ENCODE measurements at regions of chr10 and their contacts with region 1.

Region 1: GRCh38 chr10:63720072-63720537 is 198.9 kb downstream of the REEP3 start:
- DNase-seq: peak; percentile 27
- H3K4me3 ChIP-seq: peak overlapping the region in 1 of 2 experiments; percentile 53; a peak in 1 of 4 replicates
- H3K27ac ChIP-seq: peak overlapping the region in 1 of 2 experiments; percentile 56; a peak in 2 of 4 replicates
- H3K4me1 ChIP-seq: peaks cover 44 to 56% of the 10 kb centered on the region in 2 experiments
- H3K27me3 ChIP-seq: no peaks in the 10 kb centered on the region
- CTCF ChIP-seq: peak; percentile 99
- EP300 ChIP-seq: no peak
- RAD21 ChIP-seq: peak; percentile 95

Region 2: GRCh38 chr10:63166742-63167258 is 553.3 kb before region 1 on chr10:
- CTCF ChIA-PET with region 1: interaction called, 199 read pairs
- POLR2A ChIA-PET with region 1: interaction called, 4 read pairs
- DNase-seq: peak; percentile 41
- H3K4me3 ChIP-seq: no peak overlapping the region
- H3K27ac ChIP-seq: peak overlapping the region; percentile 17 to 34; a peak in 1 of 4 replicates
- H3K4me1 ChIP-seq: peaks cover 0 to 5% of the 10 kb centered on the region in 2 experiments; a peak in 3 of 4 replicates
- H3K27me3 ChIP-seq: no peaks in the 10 kb centered on the region
- CTCF ChIP-seq: peak; percentile 87
- EP300 ChIP-seq: no peak
- RAD21 ChIP-seq: peak; percentile 83

Region 3: GRCh38 chr10:63217120-63217605 is 502.9 kb before region 1 on chr10:
- CTCF ChIA-PET with region 1: interaction called, 44 read pairs
- POLR2A ChIA-PET with region 1: no interaction called
- DNase-seq: peak; percentile 54
- H3K4me3 ChIP-seq: peak overlapping the region in 1 of 2 experiments; percentile 1; a peak in 1 of 4 replicates
- H3K27ac ChIP-seq: peak overlapping the region; percentile 58 to 71; a peak in 3 of 4 replicates
- H3K4me1 ChIP-seq: peaks cover 5 to 11% of the 10 kb centered on the region in 2 experiments; a peak in 3 of 4 replicates
- H3K27me3 ChIP-seq: no peaks in the 10 kb centered on the region
- CTCF ChIP-seq: peak; percentile 78
- EP300 ChIP-seq: no peak
- RAD21 ChIP-seq: peak; percentile 81

Region 4: GRCh38 chr10:63603709-63604445 is 116.2 kb before region 1 on chr10:
- CTCF ChIA-PET with region 1: no interaction called
- POLR2A ChIA-PET with region 1: no interaction called
- DNase-seq: no peak
- H3K4me3 ChIP-seq: no peak overlapping the region
- H3K27ac ChIP-seq: peak overlapping the region in 1 of 2 experiments; percentile 39; a peak in 2 of 4 replicates
- H3K4me1 ChIP-seq: peaks cover 6 to 13% of the 10 kb centered on the region in 2 experiments; a peak in 3 of 4 replicates
- H3K27me3 ChIP-seq: no peaks in the 10 kb centered on the region
- CTCF ChIP-seq: no peak
- EP300 ChIP-seq: no peak
- RAD21 ChIP-seq: no peak

Region 5: GRCh38 chr10:63629363-63630084 is 90.6 kb before region 1 on chr10:
- CTCF ChIA-PET with region 1: interaction called, 213 read pairs
- POLR2A ChIA-PET with region 1: interaction called, 35 read pairs
- DNase-seq: peak; percentile 65
- H3K4me3 ChIP-seq: peak overlapping the region; percentile 64 to 73
- H3K27ac ChIP-seq: peak overlapping the region; percentile 100
- H3K4me1 ChIP-seq: peaks cover 25 to 27% of the 10 kb centered on the region in 2 experiments
- H3K27me3 ChIP-seq: no peaks in the 10 kb centered on the region
- CTCF ChIP-seq: peak; percentile 91
- EP300 ChIP-seq: peak; percentile 76 to 78
- RAD21 ChIP-seq: peak; percentile 94

Region 6: DNA sequence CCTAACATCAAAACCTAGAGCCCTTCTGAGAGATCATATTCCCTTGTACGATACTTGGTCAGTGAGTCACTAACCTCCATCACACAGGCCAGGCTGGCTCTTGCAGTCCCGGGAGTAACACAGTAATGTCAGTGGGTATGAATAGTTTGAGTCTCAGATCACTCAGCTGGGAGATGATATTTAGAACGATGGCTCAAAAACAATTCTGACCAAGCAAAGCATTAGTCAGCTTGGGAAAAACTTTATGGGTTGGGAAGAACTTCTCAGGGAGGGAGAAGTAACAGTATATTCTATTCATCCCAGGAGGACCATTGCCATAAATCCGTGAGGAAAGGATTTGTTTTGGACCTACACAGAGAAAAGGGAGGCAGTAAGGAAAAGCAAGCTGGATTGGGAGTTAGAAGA is 19.9 kb before region 1 on chr10:
- CTCF ChIA-PET with region 1: interaction called, 14 read pairs
- POLR2A ChIA-PET with region 1: interaction called, 3 read pairs
- DNase-seq: no peak
- H3K4me3 ChIP-seq: peak overlapping the region in 1 of 2 experiments; percentile 8; a peak in 2 of 4 replicates
- H3K27ac ChIP-seq: peak overlapping the region; percentile 95 to 99
- H3K4me1 ChIP-seq: peaks cover 22 to 61% of the 10 kb centered on the region in 2 experiments
- H3K27me3 ChIP-seq: no peaks in the 10 kb centered on the region
- CTCF ChIP-seq: no peak
- EP300 ChIP-seq: peak in 1 of 2 experiments; percentile 84; a peak in 2 of 4 replicates
- RAD21 ChIP-seq: no peak

Region 7: GRCh38 chr10:63760034-63760707 is 40.1 kb after region 1 on chr10:
- CTCF ChIA-PET with region 1: interaction called, 15 read pairs
- POLR2A ChIA-PET with region 1: no interaction called
- DNase-seq: no peak
- H3K4me3 ChIP-seq: no peak overlapping the region
- H3K27ac ChIP-seq: peak overlapping the region in 1 of 2 experiments; percentile 47; a peak in 1 of 4 replicates
- H3K4me1 ChIP-seq: peaks cover 0 to 12% of the 10 kb centered on the region in 2 experiments; a peak in 3 of 4 replicates
- H3K27me3 ChIP-seq: no peaks in the 10 kb centered on the region
- CTCF ChIP-seq: no peak
- EP300 ChIP-seq: peak in 1 of 2 experiments; percentile 29; a peak in 1 of 4 replicates
- RAD21 ChIP-seq: no peak

Region 8: DNA sequence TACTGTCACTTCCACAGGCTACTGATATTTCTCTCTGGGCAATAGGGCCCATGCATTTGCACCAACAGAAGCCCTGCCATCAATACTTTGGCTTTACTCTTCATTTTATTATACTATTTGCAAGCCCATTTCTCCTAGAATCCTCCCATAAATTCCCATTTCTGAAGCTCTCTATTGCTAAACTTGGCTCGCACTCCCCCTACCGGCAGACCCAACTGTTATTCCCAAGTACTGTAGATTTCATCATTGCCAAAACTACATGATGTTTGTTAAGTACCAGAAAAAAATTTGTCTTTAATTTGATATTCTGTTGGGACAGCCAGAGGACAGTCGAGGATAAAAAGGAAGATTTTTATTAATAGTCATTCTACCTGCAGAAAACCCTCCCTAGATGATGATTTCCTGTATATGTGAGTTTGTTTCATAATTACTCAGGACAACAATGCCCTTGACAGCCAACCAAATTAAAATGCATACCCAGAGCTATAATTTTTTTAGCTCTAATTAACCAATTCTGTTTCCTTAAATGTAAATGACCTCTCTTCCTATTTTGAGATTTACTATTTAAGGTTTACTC is 99.7 kb after region 1 on chr10:
- CTCF ChIA-PET with region 1: interaction called, 15 read pairs
- POLR2A ChIA-PET with region 1: no interaction called
- DNase-seq: peak; percentile 62
- H3K4me3 ChIP-seq: no peak overlapping the region; a peak in 1 of 4 replicates
- H3K27ac ChIP-seq: no peak overlapping the region
- H3K4me1 ChIP-seq: no peaks in the 10 kb centered on the region
- H3K27me3 ChIP-seq: no peaks in the 10 kb centered on the region
- CTCF ChIP-seq: peak; percentile 91
- EP300 ChIP-seq: no peak
- RAD21 ChIP-seq: peak; percentile 80